ENCODE measurements at regions of chr2 and their contacts with region 1.

Region 1: DNA sequence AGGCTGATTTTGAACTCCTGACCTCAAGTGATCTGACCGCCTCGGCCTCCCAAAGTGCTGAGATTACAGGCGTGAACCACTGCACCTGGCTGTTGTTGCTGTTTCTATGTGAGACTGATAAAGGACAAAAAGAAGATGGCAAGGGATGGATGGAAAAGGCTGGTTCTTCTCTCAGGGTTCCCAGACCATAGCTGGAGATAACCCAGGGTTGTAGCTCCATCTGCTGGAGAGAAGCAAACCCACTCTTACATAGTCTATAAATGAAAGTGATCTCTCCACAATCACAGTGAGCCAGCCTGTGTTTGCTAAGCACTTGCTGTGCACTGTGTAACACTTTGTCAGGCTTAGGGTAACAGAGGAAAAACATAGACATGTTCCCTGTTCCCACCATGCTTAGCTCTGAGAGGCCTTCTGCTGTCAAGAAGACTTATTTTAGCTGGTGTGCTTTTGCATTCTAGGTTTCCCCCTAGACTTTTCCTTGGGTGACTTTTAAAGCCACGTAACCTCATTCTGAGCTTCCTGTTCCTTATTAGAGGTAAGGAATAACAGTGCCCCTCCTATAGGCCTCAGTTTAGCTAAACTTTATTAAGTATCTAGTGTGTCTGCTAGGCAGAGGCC is 49.7 kb downstream of the LIMS1 start:
- DNase-seq: no peak
- H3K4me3 ChIP-seq: no peak overlapping the region
- CTCF ChIP-seq: peak; percentile 72

Region 2: GRCh38 chr2:108215794-108216211 is 368.2 kb before region 1 on chr2:
- CTCF ChIA-PET with region 1: interaction called, 11 read pairs
- POLR2A ChIA-PET with region 1: no interaction called
- DNase-seq: no peak
- H3K4me3 ChIP-seq: no peak overlapping the region
- CTCF ChIP-seq: peak; percentile 49

Region 3: GRCh38 chr2:108351889-108352288 is 232.1 kb before region 1 on chr2:
- CTCF ChIA-PET with region 1: interaction called, 64 read pairs
- POLR2A ChIA-PET with region 1: no interaction called
- DNase-seq: no peak
- H3K4me3 ChIP-seq: no peak overlapping the region
- CTCF ChIP-seq: no peak

Region 4: DNA sequence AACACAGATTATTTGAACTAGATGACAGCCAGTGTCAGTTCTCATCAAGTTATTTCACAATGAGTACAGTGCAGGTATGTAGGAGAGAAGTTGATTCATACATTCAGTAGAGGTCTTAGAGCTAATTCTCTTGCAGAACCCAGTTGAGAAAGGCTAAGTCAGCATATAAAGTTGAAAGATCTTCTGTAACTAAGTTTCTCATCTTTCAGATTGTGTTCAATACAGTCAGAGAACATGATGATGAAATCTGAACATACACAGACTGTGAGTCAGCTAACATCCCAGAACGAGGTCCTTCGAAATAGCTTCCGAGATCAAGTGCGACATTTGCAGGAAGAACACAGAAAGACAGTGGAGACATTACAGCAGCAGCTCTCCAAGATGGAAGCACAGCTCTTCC is 91.6 kb before region 1 on chr2:
- CTCF ChIA-PET with region 1: interaction called, 11 read pairs
- POLR2A ChIA-PET with region 1: no interaction called
- DNase-seq: peak; percentile 79
- H3K4me3 ChIP-seq: no peak overlapping the region
- CTCF ChIP-seq: no peak

Region 5: DNA sequence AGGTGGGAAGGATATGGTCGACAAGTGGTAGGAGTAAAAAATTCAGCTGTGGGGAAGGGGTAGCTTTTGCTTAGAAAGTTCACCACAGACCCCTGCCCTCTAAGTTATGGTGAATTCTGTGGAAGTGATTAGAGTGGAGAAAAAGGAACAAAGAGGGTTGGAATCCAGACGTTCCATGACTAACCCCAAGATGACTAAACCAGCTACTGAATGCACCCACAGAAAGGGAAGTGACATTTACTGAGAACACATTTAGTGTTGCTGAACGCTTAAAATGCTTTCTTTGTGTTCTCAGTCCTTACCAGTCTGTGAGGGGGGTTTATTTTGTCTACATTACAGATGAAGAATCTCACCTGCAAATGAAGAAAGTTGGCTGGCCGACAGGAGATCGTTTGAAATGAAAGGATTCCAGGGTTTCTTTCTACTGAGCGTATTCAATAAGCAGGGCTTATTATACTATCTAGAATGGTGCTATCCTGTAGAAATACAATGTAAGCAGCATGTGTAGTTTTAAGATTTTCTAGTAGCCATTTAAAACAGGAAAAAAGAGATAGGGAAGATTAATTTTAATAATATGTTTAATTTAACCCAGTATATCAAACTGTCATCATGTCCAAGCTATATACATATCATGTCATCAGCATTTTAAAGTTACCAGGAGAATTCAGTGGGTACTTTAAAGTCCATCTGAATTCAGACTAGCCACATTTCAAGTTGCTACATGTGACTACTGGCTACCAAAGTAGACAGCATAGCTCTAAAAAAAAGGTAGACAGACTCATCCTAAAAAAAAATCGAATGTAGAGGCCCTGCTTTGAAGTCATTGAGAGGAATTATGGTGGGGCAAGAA is 10.3 kb after region 1 on chr2:
- CTCF ChIA-PET with region 1: interaction called, 29 read pairs
- POLR2A ChIA-PET with region 1: interaction called, 5 read pairs
- DNase-seq: peak; percentile 80
- H3K4me3 ChIP-seq: no peak overlapping the region
- CTCF ChIP-seq: no peak

Region 6: DNA sequence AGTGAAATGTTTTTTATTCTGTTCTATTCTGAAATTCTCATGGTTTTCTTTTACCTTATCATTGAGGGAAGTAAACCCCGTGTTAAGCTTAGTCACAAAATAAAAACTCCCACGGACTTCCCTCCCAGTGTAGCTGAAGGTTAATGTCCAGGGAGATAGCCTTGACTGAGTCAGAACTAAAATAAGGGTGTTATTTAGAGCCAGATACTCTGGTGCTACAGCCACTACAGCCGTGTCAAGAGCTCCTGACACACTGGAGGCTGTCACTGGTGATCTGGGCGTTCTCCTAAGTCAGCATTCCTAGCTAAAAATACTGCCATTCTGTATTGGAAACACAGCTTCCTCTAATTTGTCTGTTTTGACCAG is 53.3 kb after region 1 on chr2:
- CTCF ChIA-PET with region 1: interaction called, 23 read pairs
- POLR2A ChIA-PET with region 1: no interaction called
- DNase-seq: peak; percentile 68
- H3K4me3 ChIP-seq: no peak overlapping the region
- CTCF ChIP-seq: no peak

Measured in AG04449 (cell line).